ENCODE measurements at regions of chr1 and their contacts with region 1.

Region 1: DNA sequence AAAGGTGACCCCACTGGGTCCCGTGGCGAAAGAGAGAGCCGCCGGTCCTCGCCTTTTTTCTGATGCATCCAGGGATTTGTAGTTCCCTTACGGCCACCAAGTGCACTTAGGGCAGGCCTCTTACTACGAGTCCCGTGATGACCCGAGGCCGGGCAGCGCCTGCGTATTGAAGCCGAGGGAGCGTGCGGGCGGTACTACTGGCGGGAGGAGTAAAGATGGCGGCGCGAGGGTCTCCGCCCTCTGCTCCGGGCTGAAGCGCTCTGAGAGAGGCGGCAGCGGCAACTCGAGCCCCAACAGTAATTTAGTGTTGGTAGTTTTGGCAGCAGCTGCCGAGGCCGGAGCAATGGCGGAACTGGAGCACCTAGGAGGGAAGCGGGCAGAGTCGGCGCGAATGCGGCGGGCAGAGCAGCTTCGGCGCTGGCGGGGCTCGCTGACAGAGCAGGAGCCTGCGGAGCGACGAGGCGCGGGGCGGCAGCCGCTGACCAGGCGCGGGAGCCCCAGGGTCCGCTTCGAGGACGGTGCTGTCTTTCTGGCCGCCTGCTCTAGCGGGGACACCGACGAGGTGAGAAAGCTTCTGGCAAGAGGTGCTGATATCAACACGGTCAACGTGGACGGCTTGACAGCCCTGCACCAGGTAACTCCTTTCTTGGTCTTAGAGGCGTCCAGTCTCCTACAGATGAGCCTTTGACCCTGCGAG is at the start of gene PPP1R12B:
- DNase-seq: peak; percentile 96 to 99
- H3K4me3 ChIP-seq: peak within 1 kb of the TSS; percentile 86
- H3K27ac ChIP-seq: peak within 1 kb of the TSS; percentile 56
- H3K4me1 ChIP-seq: peaks cover 45% of the 10 kb centered on the region
- H3K27me3 ChIP-seq: no peaks in the 10 kb centered on the region
- CTCF ChIP-seq: no peak
- total RNA-seq, gene PPP1R12B: 33.3 and 35.8 TPM in 2 replicates

Region 2: DNA sequence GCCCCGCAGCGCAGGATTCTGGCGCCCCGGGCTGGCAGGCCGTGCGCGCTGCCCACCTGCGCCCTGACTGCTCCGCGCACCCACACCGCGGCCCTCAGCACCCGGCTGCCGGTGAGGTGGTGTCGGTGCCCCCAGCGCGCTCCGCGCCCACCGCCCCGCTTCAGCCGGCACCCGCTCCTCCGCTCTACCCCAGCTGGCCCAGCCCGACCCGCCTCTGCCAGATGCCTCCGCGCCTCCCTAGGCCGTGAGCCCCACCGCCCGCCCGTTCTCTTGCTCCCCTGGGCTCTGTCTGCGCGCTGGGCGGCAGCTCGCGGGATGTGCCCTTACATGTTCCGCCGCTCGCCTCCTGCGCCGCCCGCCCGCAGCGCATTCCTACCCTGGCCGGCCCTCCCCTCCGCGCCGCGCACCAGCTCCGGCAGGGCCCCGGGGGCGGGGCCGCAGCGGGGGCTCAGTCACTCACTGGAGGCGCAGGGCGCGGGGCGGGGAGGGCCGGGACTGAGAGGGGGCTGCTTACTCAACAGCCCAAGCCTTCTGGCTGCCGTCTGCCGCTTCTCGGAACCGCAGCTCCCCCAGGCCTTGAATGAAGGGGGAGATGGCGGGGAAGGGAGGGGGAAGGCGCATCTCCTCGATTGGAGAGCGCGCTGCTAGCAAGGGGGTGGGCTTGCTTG is 879.7 kb before region 1 on chr1 and contains the start of gene PHLDA3:
- CTCF ChIA-PET with region 1: no interaction called
- POLR2A ChIA-PET with region 1: no interaction called
- intact Hi-C with region 1: loop called (anchors 10 kb)
- DNase-seq: peak; percentile 63 to 85
- H3K4me3 ChIP-seq: peak within 1 kb of the TSS; percentile 97
- H3K27ac ChIP-seq: peak within 1 kb of the TSS; percentile 95
- H3K4me1 ChIP-seq: peaks cover 31% of the 10 kb centered on the region
- H3K27me3 ChIP-seq: no peaks in the 10 kb centered on the region
- CTCF ChIP-seq: no peak
- total RNA-seq, gene PHLDA3: 31.6 and 46.4 TPM in 2 replicates

Region 3: GRCh38 chr1:202376247-202376646 is 27.6 kb after region 1 on chr1:
- CTCF ChIA-PET with region 1: no interaction called
- POLR2A ChIA-PET with region 1: no interaction called
- intact Hi-C with region 1: no loop called
- DNase-seq: no peak
- H3K4me3 ChIP-seq: no peak overlapping the region
- H3K27ac ChIP-seq: peak overlapping the region; percentile 30; the same call in 1 of the 2 replicates
- H3K4me1 ChIP-seq: peaks cover 44% of the 10 kb centered on the region
- H3K27me3 ChIP-seq: no peaks in the 10 kb centered on the region
- CTCF ChIP-seq: no peak

Region 4: DNA sequence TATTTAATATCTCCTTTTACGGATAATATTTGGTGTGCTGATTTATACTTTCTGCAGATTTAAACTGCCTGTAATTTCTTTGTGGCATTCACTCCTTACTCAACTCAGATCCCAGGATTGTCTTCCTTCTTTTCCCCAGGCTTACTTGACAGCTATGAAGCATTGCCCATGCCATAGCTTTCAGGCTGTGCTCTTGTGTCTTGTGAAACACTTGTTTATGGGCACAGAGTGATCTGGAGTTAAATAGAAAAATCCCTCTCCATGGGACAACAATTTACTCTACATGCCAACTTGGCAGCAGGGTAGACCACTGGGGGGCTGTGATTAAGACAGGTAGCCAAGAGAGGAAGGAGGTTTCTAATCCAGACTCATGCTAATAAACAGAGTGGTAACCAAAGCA is 57.3 kb after region 1 on chr1:
- CTCF ChIA-PET with region 1: no interaction called
- POLR2A ChIA-PET with region 1: interaction called, 19 read pairs
- intact Hi-C with region 1: loop called (anchors 10 kb)
- DNase-seq: no peak
- H3K4me3 ChIP-seq: no peak overlapping the region
- H3K27ac ChIP-seq: peak overlapping the region; percentile 20; the same call in 1 of the 2 replicates
- H3K4me1 ChIP-seq: peaks cover 44% of the 10 kb centered on the region
- H3K27me3 ChIP-seq: no peaks in the 10 kb centered on the region
- CTCF ChIP-seq: no peak

Region 5: DNA sequence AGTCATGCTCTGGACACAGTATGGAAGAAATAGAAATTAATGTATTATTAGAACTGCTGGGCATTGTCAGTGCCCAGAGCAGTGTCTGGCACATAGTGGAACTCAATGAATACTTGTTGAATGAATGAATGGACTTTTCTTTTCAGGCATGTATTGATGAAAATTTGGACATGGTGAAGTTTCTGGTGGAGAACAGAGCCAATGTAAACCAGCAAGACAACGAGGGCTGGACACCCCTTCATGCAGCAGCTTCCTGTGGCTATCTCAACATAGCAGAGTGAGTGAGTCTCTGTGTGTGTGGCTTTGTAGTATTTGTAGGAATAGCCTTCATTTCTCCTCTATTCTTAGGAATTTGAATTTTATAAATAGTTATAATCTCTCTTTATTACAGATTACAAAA is 68.0 kb after region 1 on chr1:
- CTCF ChIA-PET with region 1: no interaction called
- POLR2A ChIA-PET with region 1: no interaction called
- intact Hi-C with region 1: loop called (anchors 10 kb)
- DNase-seq: no peak
- H3K4me3 ChIP-seq: no peak overlapping the region
- H3K27ac ChIP-seq: no peak overlapping the region
- H3K4me1 ChIP-seq: peaks cover 30% of the 10 kb centered on the region
- H3K27me3 ChIP-seq: no peaks in the 10 kb centered on the region
- CTCF ChIP-seq: no peak

Region 6: DNA sequence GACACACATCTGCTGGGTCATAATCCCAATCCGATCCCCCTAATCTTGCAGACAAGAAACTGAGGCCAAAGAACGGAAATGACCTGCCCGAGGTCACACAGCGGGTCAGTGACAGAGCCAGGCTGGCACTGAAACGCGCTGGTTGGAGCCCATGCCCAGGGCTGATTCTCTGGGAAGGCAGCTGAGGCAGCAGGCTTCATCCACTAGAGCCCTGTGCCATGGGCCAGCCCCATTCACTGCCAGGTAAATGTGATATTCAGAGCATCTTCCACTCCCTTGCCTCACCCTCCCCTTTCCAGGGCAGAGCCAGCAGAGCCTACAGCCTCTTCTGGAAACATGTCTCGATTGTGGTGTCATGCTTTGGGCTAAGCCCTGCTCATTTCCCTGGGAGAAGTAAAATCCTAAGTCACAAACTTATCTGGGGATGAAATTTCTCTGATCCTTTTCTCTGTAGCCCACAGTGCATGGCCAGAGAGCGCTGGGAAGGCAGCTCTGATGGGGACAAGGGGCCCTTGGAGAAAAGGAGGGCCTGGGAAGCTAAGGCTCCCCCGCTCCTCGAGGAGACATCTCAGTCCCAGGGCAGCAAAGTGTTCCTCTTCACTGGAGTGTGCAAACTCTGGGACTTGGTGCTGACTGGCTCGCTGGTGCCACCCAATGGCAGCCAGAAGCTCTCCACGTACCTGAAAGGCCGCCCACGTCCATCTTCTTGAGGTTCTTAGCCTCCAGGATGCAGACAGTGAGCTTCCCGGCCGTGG is 251.2 kb after region 1 on chr1:
- CTCF ChIA-PET with region 1: no interaction called
- POLR2A ChIA-PET with region 1: no interaction called
- intact Hi-C with region 1: loop called (anchors 1 kb)
- DNase-seq: peak; percentile 56 to 76
- H3K4me3 ChIP-seq: no peak overlapping the region
- H3K27ac ChIP-seq: no peak overlapping the region
- H3K4me1 ChIP-seq: no peaks in the 10 kb centered on the region
- H3K27me3 ChIP-seq: no peaks in the 10 kb centered on the region
- CTCF ChIP-seq: peak; percentile 83

Region 7: GRCh38 chr1:202625416-202626360 is 277.0 kb after region 1 on chr1:
- CTCF ChIA-PET with region 1: no interaction called
- POLR2A ChIA-PET with region 1: no interaction called
- intact Hi-C with region 1: loop called (anchors 5 kb)
- DNase-seq: peak in 1 of 2 experiments; percentile 68
- H3K4me3 ChIP-seq: no peak overlapping the region
- H3K27ac ChIP-seq: no peak overlapping the region
- H3K4me1 ChIP-seq: no peaks in the 10 kb centered on the region
- H3K27me3 ChIP-seq: peaks cover 13% of the 10 kb centered on the region; the same call in 1 of the 2 replicates
- CTCF ChIP-seq: peak; percentile 66